PC-9 (cell line): ENCODE measurements at regions of chr7 and their contacts with region 1.

Region 1: DNA sequence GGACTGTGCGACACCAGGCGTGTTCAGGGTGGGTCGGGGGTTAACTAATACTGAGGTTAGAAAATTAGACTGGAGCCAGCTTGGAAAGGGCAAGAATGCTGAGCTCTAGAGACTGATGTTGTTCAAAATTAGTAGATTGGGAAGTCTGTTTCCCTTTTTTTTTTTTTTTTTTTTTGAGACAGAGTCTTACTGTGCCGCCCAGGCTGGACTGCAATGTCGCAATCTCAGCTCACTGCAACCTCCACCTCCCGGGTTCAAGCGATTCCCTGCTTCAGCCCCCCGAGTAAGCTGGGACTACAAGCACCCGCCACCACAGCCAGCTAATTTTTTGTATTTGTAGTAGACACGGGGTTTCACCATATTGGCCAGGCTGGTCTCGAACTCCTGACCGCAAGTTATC is 2.7 kb upstream of the CPVL start:
- DNase-seq: no peak
- H3K4me3 ChIP-seq: no peak overlapping the region
- H3K27ac ChIP-seq: no peak overlapping the region
- H3K4me1 ChIP-seq: no peaks in the 10 kb centered on the region; the same call in 1 of the 2 replicates
- H3K27me3 ChIP-seq: peaks cover 7% of the 10 kb centered on the region; the same call in 1 of the 2 replicates
- CTCF ChIP-seq: no peak

Region 2: DNA sequence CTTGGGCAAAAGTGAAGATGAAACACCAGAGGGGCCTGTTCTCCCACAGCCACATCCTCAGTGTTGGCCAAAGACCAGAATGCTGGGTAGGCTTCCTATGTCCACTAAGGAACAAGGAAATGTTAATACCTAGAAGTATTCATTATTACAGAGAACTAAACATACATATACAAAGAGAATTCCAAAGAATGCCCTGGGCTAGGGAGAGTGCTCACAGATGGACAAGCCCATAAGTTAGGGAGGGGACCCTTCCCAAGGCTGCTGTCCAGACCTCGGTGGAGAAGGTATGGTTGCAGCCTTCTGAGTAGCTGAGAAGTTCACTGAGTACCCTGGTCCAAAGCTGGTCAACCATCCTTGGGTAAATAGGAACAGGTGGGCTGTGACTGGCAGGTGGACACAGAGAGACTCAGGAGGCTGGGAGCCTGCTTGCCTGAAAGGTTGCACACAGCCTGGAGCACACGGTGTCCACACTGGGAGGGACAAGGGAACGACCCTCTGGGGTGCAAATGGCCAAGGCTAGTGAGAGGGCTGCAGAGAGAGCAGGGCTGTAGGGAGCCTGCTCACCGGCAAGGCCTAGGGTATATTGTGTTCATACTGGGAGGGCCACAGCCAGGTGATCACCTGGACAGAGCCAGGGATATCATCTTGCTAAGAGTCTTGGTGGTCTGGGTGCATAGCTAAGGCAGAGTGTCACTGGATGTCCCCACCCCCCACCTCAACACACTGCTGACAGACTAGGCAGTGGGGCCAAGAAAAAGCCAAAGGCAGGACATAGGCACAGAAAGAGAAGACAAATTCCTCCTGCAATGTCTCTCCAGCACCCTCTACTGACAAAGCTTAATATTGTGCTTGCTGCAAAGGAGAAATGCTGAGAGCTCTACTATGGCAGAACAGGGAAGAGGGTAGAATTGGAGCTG is 43.0 kb before region 1 on chr7:
- CTCF ChIA-PET with region 1: interaction called, 10 read pairs
- POLR2A ChIA-PET with region 1: no interaction called
- intact Hi-C with region 1: no loop called
- DNase-seq: peak; percentile 10 to 58
- H3K4me3 ChIP-seq: no peak overlapping the region
- H3K27ac ChIP-seq: peak overlapping the region; percentile 3; the same call in 1 of the 2 replicates
- H3K4me1 ChIP-seq: peaks cover 42% of the 10 kb centered on the region
- H3K27me3 ChIP-seq: no peaks in the 10 kb centered on the region
- CTCF ChIP-seq: peak; percentile 88